Common myeloid progenitor, CD34-positive (primary cell): ENCODE measurements at regions of chr2 and their contacts with region 1.

Region 1: DNA sequence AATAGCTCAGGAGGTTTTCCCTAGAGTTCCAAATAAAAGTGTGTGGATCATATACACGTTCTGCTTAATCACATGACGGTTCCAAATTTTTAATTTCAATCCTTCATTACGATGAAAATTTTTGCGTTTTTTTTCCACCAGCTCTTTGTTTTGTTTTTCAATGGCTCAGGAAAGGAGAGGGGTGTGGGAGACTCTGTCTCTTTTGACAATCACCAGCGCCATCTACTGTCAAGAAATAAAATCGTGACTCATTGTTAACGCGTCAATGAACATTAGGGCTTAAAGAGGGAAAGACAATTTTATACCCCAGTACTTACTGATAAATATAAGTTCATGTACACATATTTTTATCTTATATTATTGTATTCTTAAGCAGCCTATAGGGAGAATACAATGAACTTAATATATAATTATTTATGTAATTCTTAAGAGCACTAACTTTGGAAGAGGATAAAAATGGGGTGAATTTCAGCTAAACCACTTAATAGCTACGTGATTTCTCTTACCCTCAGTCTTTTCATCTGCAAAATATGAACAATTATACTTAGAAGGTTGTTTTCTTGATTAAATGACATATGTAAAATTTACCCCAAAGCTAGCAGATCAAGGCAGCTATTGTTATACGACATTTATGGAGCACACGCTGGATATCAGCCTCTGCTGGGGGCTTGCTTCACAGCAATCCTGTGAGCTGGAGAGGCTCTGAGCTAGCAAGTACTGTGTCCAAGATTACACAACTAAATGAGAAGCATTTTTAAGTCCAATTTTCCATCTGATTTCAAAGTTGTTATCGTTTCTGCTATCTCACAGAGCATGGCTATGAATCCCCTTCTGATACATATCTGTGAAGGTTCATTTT is 47.4 kb upstream of the RMDN2 start:
- DNase-seq: peak; percentile 70 to 78 (median 72)
- H3K4me3 ChIP-seq: no peak overlapping the region
- H3K27ac ChIP-seq: no peak overlapping the region
- H3K4me1 ChIP-seq: peaks cover 0 to 26% (median 15%) of the 10 kb centered on the region in 4 experiments
- H3K27me3 ChIP-seq: no peaks in the 10 kb centered on the region

Region 2: GRCh38 chr2:37394796-37395555 is 482.7 kb before region 1 on chr2:
- CTCF ChIA-PET with region 1: interaction called, 73 read pairs
- POLR2A ChIA-PET with region 1: no interaction called
- DNase-seq: no peak
- H3K4me3 ChIP-seq: no peak overlapping the region
- H3K27ac ChIP-seq: no peak overlapping the region
- H3K4me1 ChIP-seq: peaks cover 7 to 29% (median 9%) of the 10 kb centered on the region in 4 experiments
- H3K27me3 ChIP-seq: no peaks in the 10 kb centered on the region

Region 3: DNA sequence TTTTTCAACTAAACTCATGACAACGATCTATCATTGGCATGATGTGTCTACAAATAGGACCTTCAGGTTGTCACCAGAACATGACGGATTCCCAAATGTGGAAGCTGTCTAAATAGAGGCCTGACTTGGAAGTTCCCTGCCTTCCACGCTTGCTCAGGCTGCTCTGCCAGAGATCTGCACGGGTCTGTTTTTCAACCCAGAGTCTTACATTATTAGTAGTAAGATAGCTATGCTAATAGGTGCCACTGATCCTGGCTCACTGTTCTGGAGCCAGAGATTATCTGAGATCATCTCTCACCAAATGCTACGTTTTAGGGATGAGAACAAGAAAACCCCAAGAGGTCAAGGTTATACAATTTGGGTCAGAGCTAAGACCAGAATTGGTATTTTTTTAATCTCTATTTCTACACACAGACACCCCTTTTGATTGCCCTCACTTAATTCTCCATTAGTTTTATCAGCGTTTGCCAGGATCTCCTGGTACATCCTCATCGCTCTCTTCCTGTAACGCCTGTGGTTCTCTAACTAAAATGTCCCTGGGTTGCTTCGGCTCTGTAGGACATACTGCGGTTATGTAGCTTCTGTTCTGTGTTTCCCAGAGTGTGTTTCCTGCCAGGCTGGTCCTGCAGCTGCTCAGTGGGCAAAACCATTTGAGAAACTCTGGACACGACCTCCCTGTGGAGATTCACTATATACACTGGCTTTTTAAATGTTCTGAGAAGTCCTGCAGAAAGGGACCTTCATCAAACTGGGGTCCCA is 211.9 kb before region 1 on chr2:
- CTCF ChIA-PET with region 1: interaction called, 10 read pairs
- POLR2A ChIA-PET with region 1: no interaction called
- DNase-seq: peak; percentile 18 to 59 (median 55)
- H3K4me3 ChIP-seq: peak overlapping the region in 1 of 7 experiments; percentile 17
- H3K27ac ChIP-seq: no peak overlapping the region
- H3K4me1 ChIP-seq: peaks cover 25 to 56% (median 35%) of the 10 kb centered on the region in 4 experiments
- H3K27me3 ChIP-seq: no peaks in the 10 kb centered on the region

Region 4: GRCh38 chr2:37832590-37833197 is 45.0 kb before region 1 on chr2:
- CTCF ChIA-PET with region 1: interaction called, 114 read pairs
- POLR2A ChIA-PET with region 1: no interaction called
- DNase-seq: peak; percentile 80 to 83 (median 80)
- H3K4me3 ChIP-seq: no peak overlapping the region
- H3K27ac ChIP-seq: no peak overlapping the region
- H3K4me1 ChIP-seq: peaks cover 18 to 41% (median 31%) of the 10 kb centered on the region in 4 experiments
- H3K27me3 ChIP-seq: no peaks in the 10 kb centered on the region

Region 5: DNA sequence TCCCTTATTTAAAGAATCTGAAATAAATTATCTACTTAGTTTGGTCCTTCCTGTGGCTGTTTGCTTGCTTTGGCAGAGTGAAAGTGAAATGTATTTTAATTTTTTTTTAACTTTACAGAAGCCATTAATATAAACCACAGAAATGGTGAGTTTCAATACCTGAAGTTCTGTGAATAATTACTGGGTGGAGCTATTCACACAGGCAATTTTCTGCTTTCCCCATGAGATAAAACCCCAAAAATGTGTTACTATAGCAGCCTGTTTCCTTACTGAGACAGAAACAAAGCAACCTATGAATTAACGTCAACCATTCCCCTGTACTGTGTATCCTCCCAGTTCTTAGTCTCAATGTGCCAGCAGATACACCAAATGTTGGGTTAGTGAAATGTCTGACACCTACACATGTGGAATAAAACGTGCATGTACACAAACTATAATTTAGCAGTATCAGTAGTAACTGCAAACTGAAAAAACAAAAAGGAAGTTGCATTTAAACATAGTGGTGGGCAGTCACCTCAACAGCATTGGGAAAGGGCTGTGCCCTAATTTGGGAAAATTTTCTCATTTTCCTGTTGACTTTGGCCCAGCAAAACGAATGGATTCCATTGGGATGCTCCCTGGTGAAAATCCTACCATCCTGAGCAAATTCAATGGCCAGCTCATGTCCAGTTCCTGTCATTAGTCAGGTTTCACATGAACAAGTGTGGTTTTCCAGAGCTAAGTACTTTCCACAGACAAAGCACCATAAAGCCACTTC is 25.7 kb before region 1 on chr2:
- CTCF ChIA-PET with region 1: interaction called, 43 read pairs
- POLR2A ChIA-PET with region 1: interaction called, 3 read pairs
- DNase-seq: peak; percentile 42 to 83 (median 71)
- H3K4me3 ChIP-seq: peak overlapping the region in 1 of 7 experiments; percentile 43
- H3K27ac ChIP-seq: peak overlapping the region; percentile 37 to 70
- H3K4me1 ChIP-seq: peaks cover 19 to 68% (median 60%) of the 10 kb centered on the region in 4 experiments
- H3K27me3 ChIP-seq: no peaks in the 10 kb centered on the region

Region 6: DNA sequence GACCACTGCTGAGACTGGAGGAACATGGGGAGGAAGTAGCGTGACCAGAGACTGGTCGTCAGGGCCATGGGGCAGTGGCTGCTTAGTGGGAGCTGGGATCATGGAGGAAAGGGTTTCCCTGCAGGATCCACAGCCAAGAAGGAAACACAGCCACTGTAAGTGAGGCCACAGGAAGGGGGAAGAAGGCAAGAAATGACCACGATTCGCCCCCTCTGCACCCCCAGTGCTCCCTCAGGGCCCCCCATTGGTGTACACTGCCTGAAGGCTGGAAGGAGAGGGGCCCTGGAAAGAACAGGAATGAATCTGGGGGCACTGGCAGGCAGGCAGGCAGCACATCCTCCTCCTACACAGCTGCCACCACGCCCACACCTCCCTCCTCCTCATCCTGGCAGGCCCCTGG is 15.1 kb before region 1 on chr2:
- CTCF ChIA-PET with region 1: interaction called, 47 read pairs
- POLR2A ChIA-PET with region 1: no interaction called
- DNase-seq: no peak
- H3K4me3 ChIP-seq: no peak overlapping the region
- H3K27ac ChIP-seq: no peak overlapping the region
- H3K4me1 ChIP-seq: peaks cover 0 to 8% (median under 1%) of the 10 kb centered on the region in 4 experiments
- H3K27me3 ChIP-seq: no peaks in the 10 kb centered on the region

Region 7: DNA sequence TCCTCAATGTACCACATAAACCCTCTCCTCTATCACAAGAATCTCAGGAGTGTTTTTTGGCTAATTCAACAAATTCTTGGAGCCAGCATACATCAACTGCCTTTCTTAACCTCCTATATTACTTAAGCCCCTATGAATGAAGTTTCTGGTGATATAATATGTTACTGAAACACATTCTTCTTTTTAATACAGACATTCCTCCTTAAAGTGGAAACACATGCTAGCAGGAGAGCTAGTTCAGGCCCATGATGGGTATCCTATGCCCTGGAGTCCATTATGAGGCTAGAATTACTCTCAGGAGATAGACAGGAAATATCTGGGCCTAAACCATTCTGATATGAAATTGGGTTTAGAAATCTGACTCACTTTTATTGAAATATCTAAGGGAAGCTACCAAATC is 20.8 kb after region 1 on chr2:
- CTCF ChIA-PET with region 1: no interaction called
- POLR2A ChIA-PET with region 1: no interaction called
- DNase-seq: no peak
- H3K4me3 ChIP-seq: no peak overlapping the region
- H3K27ac ChIP-seq: no peak overlapping the region
- H3K4me1 ChIP-seq: peaks cover 0 to 14% (median under 1%) of the 10 kb centered on the region in 4 experiments
- H3K27me3 ChIP-seq: no peaks in the 10 kb centered on the region